PC-3 (cell line): ENCODE measurements at regions of chr5 and their contacts with region 1.

Region 1: GRCh38 chr5:172106511-172107356 is 81.3 kb downstream of the STK10 start:
- DNase-seq: peak; percentile 59
- ATAC-seq: peak; percentile 21
- H3K4me3 ChIP-seq: peak overlapping the region; percentile 30; the same call in 1 of the 2 replicates
- H3K27ac ChIP-seq: peak overlapping the region; percentile 11; the same call in 1 of the 2 replicates
- H3K4me1 ChIP-seq: peaks cover 32% of the 10 kb centered on the region
- H3K27me3 ChIP-seq: no peaks in the 10 kb centered on the region
- CTCF ChIP-seq: peak; percentile 92

Region 2: GRCh38 chr5:172283020-172283861 is 176.5 kb after region 1 on chr5 and contains the start of gene UBTD2:
- CTCF ChIA-PET with region 1: no interaction called
- POLR2A ChIA-PET with region 1: no interaction called
- intact Hi-C with region 1: loop called (anchors 2 kb)
- DNase-seq: peak; percentile 74
- ATAC-seq: peak; percentile 75
- H3K4me3 ChIP-seq: peak within 1 kb of the TSS; percentile 97
- H3K27ac ChIP-seq: peak within 1 kb of the TSS; percentile 43
- H3K4me1 ChIP-seq: peaks cover 21% of the 10 kb centered on the region
- H3K27me3 ChIP-seq: no peaks in the 10 kb centered on the region
- CTCF ChIP-seq: peak; percentile 49; the same call in 1 of the 2 replicates
- total RNA-seq, gene UBTD2: 22.6 and 23.8 TPM in 2 replicates

Region 3: GRCh38 chr5:172293054-172293744 is 186.5 kb after region 1 on chr5:
- CTCF ChIA-PET with region 1: interaction called, 3 read pairs
- POLR2A ChIA-PET with region 1: no interaction called
- intact Hi-C with region 1: loop called (anchors 1 kb)
- DNase-seq: peak; percentile 81
- ATAC-seq: peak; percentile 99
- H3K4me3 ChIP-seq: no peak overlapping the region
- H3K27ac ChIP-seq: no peak overlapping the region
- H3K4me1 ChIP-seq: no peaks in the 10 kb centered on the region
- H3K27me3 ChIP-seq: no peaks in the 10 kb centered on the region
- CTCF ChIP-seq: peak; percentile 92

Region 4: GRCh38 chr5:172370648-172371545 is 264.2 kb after region 1 on chr5:
- CTCF ChIA-PET with region 1: interaction called, 3 read pairs
- POLR2A ChIA-PET with region 1: no interaction called
- intact Hi-C with region 1: loop called (anchors 10 kb)
- DNase-seq: peak; percentile 85
- ATAC-seq: no peak
- H3K4me3 ChIP-seq: no peak overlapping the region
- H3K27ac ChIP-seq: no peak overlapping the region
- H3K4me1 ChIP-seq: no peaks in the 10 kb centered on the region
- H3K27me3 ChIP-seq: no peaks in the 10 kb centered on the region
- CTCF ChIP-seq: peak; percentile 90

Region 5: DNA sequence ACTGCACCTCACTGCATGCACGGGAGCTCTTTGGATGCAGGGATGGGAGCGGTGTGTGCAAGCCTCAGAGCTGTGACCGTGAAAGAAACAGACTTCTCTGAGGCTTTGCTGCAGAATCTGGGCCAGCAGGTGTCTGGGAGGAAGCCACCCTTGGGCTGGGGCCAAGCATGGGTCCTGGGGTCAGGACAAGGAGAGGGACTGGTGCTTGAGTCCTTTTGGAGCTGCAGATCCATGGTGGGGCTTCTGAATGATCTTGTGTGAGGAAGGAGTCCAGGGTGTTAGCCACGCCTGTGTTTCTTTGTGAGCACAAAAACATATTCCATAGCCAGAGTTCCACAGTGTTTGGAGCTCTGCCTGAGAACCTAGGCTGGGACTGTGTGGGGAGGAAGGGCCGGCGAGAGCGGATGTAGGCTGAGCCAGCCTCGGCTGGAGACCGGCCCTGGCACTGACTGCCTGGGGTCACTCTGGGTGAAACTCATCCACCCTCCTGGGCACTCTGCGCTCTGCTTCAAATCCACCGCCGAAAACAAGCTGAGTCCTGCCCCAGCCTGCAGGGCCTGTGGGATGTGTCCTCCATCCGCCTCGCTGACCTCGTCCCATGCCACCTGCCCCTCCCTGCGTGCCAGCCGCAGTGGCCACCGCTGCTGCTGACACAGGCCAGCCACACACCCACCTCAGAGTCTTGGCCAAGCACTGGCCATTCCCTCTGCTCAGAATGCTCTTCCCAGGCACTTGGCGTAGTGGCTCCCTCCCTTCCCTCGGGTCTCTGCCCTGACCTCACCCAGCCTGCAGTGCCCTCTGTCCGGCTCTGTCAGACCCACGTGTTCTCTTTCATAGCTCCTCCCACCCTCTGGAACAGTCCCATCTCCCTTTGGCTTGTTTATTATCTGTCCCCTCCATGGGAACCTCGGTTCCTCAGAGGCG is 754.0 kb after region 1 on chr5:
- CTCF ChIA-PET with region 1: no interaction called
- POLR2A ChIA-PET with region 1: no interaction called
- intact Hi-C with region 1: no loop called
- DNase-seq: no peak
- ATAC-seq: no peak
- H3K4me3 ChIP-seq: no peak overlapping the region
- H3K27ac ChIP-seq: peak overlapping the region; percentile 84
- H3K4me1 ChIP-seq: peaks cover 36% of the 10 kb centered on the region
- H3K27me3 ChIP-seq: no peaks in the 10 kb centered on the region
- CTCF ChIP-seq: no peak